Colonic mucosa (tissue), 4 donors: ENCODE measurements at regions of chr2 and their contacts with region 1.

Region 1: GRCh38 chr2:44087036-44087713 is 81.5 kb upstream of the PPM1B start:
- DNase-seq: peak; percentile 93
- H3K4me3 ChIP-seq: peak overlapping the region; percentile 18
- H3K27ac ChIP-seq: peak overlapping the region; percentile 28
- H3K4me1 ChIP-seq: no peaks in the 10 kb centered on the region
- H3K27me3 ChIP-seq: no peaks in the 10 kb centered on the region
- CTCF ChIP-seq: peak; percentile 95

Region 2: GRCh38 chr2:44233450-44234128 is 146.4 kb after region 1 on chr2:
- intact Hi-C with region 1: loop called (anchors 10 kb)
- DNase-seq: no peak
- H3K4me3 ChIP-seq: no peak overlapping the region
- H3K27ac ChIP-seq: no peak overlapping the region
- H3K4me1 ChIP-seq: no peaks in the 10 kb centered on the region
- H3K27me3 ChIP-seq: no peaks in the 10 kb centered on the region
- CTCF ChIP-seq: no peak

Region 3: DNA sequence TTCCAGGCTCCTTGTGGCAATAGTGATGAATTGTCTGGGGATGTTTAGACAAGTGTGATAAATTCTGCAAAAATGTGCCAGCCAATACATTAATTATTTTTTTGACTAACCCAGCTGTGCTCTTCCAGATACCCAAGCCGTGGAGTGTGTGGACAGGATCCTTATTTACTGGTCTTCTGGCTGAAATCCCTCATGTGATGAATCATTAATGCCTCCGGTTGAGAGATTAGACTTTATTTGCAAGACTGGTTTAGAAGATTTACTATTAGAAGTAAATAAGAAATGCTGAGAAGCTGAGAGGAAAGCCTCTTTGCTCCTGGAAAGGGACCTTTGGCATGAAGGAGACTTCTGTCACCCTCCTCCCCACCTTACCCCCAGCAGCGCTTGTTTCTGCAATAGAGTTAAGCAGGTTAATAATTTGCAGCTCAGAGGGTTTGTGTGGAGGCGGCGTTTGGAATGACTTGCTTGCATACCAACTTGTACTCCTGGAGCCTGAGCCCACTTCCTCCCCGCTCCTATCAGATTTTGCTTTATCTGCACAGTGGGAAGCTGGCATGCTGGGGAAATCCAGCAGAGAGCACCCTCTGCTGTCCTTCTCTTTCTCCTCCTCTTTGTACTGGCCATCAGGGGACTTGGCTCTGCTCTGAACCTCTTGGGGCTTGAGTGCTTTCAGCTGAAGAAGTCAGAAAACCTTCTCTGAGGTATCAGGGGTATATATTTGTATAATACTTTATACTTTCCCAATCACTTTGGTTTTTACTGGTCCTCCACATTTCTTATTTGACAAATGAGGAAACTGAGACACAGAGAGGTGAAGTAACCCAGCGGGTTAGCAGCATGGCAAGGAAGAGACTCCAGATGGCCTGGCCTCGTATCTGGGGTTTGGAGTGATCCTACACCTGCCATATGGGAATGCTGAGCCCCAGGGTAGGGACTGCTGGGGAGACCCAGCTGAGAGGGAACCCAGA is 204.4 kb after region 1 on chr2:
- intact Hi-C with region 1: loop called (anchors 5 kb)
- DNase-seq: peak; percentile 76
- H3K4me3 ChIP-seq: no peak overlapping the region
- H3K27ac ChIP-seq: peak overlapping the region; percentile 56
- H3K4me1 ChIP-seq: peaks cover 10% of the 10 kb centered on the region
- H3K27me3 ChIP-seq: no peaks in the 10 kb centered on the region
- CTCF ChIP-seq: peak; percentile 52